ENCODE measurements at regions of chr3 and their contacts with region 1.

Region 1: GRCh38 chr3:176514297-176514696 is 683.0 kb downstream of the TBL1XR1 start:
- DNase-seq: peak; percentile 75 to 87
- H3K4me3 ChIP-seq: no peak overlapping the region
- H3K4me1 ChIP-seq: peaks cover 5% of the 10 kb centered on the region
- H3K27me3 ChIP-seq: no peaks in the 10 kb centered on the region

Region 2: DNA sequence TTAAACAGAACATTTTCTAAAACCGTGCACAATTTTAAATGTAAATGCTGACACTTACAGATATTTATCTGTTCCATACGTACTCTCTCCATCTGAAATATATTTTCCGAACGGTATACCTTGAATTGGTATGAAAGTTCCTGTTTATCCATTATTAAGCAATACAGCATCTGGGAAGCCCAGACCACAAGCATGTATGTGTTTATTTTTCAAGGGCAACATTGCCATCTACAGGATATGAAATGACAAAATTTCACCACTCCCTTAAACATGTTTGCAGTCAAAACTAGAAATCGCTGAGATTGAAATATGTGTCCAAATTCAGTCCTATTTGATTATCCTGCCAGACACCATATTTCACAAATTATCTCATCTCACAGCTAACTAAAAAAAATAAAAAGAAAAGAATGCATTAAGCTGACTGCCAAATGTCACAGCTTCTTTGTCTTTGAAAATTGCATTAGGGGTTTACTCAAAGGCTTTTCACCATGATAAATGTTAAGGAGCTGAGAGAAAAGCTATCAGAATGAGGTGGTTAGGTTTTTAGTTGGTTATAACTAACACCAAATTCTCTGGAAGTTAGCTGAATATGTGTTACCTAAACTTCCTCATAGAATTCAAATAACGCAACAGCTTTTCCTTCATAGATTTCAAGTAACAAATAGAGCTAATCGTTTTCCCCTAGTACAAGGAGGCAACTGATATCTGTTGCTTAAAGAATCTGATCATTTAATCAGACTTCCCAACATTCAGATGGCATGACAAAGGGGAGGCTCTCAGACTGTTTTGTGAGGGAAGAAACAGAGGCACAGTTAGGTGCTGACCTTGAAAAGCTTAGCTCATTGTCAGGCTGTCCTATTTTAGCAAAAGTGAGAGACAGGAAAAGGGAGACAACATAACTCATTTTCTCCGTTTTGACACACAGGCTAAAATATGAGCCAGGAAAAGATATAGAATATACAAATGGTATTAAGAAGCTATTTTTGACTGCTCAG is 149.8 kb after region 1 on chr3:
- in situ Hi-C with region 1: loop called (anchors 10 kb)
- DNase-seq: peak; percentile 10 to 63
- H3K4me3 ChIP-seq: no peak overlapping the region
- H3K4me1 ChIP-seq: peaks cover 10% of the 10 kb centered on the region; the same call in 1 of the 2 replicates
- H3K27me3 ChIP-seq: no peaks in the 10 kb centered on the region

Region 3: DNA sequence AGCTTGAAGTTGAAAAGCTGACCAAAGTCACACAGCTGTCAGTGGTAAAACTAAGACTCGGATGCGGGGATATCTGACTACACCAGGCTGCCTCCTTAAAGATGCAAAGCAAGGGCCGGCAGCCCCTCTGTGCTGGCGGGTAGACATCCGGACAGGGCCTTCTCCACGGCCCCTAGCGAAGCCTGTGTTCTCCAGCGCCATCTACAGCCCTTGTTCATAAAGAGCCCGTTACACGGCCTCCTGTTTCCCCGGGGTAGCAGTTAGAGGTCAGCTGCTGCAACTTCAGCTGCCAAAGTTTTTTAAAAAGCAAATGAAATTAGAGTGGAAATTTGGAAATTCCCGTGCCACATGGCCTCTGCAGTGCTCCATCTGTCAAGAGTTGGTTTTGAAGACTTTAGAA is 300.0 kb after region 1 on chr3:
- in situ Hi-C with region 1: loop called (anchors 25 kb)
- DNase-seq: peak; percentile 65 to 86
- H3K4me3 ChIP-seq: no peak overlapping the region
- H3K4me1 ChIP-seq: no peaks in the 10 kb centered on the region
- H3K27me3 ChIP-seq: no peaks in the 10 kb centered on the region